ENCODE measurements at regions of chr4 and their contacts with region 1.

Region 1: DNA sequence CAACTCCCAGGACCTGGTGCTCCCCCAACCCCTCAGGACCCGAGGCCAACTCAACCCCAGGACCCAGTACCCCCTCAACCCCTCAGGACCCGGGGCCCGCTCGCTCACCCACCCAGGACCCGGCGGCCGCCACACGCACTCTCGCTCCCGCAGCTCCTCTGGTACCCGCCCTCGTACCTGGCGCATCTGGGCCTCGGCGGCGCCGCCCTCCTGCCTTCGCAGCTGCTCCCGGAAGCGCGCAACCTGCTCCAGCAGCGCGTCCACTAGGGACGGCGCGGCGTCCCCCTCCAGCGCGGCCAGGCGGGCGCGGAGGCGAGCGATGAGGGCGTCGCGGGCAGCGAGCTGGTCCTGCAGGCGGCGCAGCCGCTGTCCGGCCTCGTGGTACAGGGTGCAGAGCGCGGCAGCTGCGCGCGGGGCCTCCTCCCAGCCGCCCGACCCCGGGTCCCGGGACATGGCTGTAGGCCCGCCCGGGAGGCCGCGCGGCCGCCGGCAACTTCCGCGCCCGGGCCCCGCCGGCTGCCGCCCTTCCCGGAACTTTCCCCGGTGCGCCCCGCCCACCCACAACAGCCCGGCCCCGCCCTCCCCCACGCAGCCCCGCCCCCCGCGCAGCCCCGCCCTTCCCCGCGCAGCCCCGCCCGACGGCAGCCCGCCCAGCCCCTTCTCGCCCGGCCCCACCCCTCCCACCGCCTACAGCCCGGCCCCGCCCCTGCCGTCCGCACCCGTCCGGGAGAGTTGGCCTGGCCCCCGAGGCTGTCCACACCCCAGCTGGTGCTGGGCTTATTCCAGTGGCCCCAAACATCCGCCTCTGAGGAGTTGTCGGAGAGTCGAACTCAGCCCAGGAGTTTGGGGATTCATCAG is at the start of gene TNIP2:
- DNase-seq: peak; percentile 77 to 85 (median 81)
- H3K4me3 ChIP-seq: peak within 1 kb of the TSS; percentile 25 to 68
- H3K4me3 Mint-ChIP-seq: peak within 1 kb of the TSS; percentile 75 to 89 (median 86)
- H3K27ac ChIP-seq: peak within 1 kb of the TSS; percentile 83
- H3K27ac Mint-ChIP-seq: peak within 1 kb of the TSS; percentile 68 to 93 (median 85)
- H3K4me1 ChIP-seq: peaks cover 25% of the 10 kb centered on the region
- H3K4me1 Mint-ChIP-seq: peaks cover 18 to 39% (median 29%) of the 10 kb centered on the region in 4 donors
- H3K27me3 ChIP-seq: no peaks in the 10 kb centered on the region
- H3K27me3 Mint-ChIP-seq: no peaks in the 10 kb centered on the region
- total RNA-seq, gene TNIP2: 50.0 to 50.5 TPM

Region 2: GRCh38 chr4:2662598-2662997 is 93.5 kb before region 1 on chr4:
- CTCF ChIA-PET with region 1: no interaction called
- POLR2A ChIA-PET with region 1: no interaction called
- intact Hi-C with region 1: no loop called
- DNase-seq: no peak
- H3K4me3 ChIP-seq: no peak overlapping the region
- H3K4me3 Mint-ChIP-seq: no peak overlapping the region
- H3K27ac ChIP-seq: no peak overlapping the region
- H3K27ac Mint-ChIP-seq: no peak overlapping the region
- H3K4me1 ChIP-seq: peaks cover 13% of the 10 kb centered on the region
- H3K4me1 Mint-ChIP-seq: peaks cover 17 to 22% (median 19%) of the 10 kb centered on the region in 4 donors
- H3K27me3 ChIP-seq: no peaks in the 10 kb centered on the region
- H3K27me3 Mint-ChIP-seq: no peaks in the 10 kb centered on the region

Region 3: DNA sequence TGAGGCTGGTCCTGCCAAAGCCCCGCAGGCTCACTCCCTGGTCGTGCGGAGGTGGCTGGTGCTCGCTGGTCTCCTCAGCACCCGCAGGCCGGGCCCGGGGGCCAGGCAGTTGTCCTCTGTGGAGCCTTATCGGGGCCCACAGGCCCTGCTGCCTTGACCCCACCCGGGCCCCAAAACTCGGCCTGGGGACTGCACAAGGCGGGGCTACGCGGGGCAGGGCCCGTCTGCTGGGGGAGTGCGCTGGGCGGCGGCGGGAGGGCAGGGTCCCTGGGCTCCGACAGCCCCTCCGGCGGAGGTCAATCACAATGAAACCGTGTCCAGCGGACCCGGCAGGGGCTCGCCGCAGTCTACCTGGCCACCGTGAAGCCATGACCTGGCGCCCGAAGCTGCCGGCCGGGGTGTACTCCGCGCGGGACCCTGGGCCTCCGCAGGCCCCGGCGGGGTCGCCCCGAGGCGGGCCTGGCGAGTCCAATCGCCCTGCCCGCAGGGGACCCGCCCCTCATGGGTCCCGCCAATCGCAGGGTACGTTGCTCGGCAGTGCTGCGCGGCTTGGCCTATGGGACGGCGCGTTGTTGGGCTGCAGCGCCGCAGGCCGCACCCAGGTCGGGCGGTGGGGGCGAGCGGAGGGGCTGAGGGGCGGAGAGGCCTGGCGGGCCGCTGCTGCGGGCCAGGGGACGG is 87.3 kb after region 1 on chr4 and contains the start of gene ADD1:
- CTCF ChIA-PET with region 1: no interaction called
- POLR2A ChIA-PET with region 1: interaction called, 4 read pairs
- intact Hi-C with region 1: loop called (anchors 5 kb)
- DNase-seq: peak; percentile 87 to 99 (median 93)
- H3K4me3 ChIP-seq: peak within 1 kb of the TSS; percentile 72 to 81
- H3K4me3 Mint-ChIP-seq: peak within 1 kb of the TSS; percentile 90 to 98 (median 94)
- H3K27ac ChIP-seq: peak within 1 kb of the TSS; percentile 84
- H3K27ac Mint-ChIP-seq: peak within 1 kb of the TSS; percentile 93 to 97 (median 95)
- H3K4me1 ChIP-seq: peaks cover 71% of the 10 kb centered on the region
- H3K4me1 Mint-ChIP-seq: peaks cover 37 to 72% (median 45%) of the 10 kb centered on the region in 4 donors
- H3K27me3 ChIP-seq: no peaks in the 10 kb centered on the region
- H3K27me3 Mint-ChIP-seq: no peaks in the 10 kb centered on the region
- total RNA-seq, gene ADD1: 289 to 293 TPM

Region 4: GRCh38 chr4:3715061-3715854 is 959.2 kb after region 1 on chr4:
- CTCF ChIA-PET with region 1: no interaction called
- POLR2A ChIA-PET with region 1: no interaction called
- intact Hi-C with region 1: no loop called
- DNase-seq: no peak
- H3K4me3 ChIP-seq: no peak overlapping the region
- H3K4me3 Mint-ChIP-seq: no peak overlapping the region
- H3K27ac ChIP-seq: no peak overlapping the region
- H3K27ac Mint-ChIP-seq: no peak overlapping the region
- H3K4me1 ChIP-seq: no peaks in the 10 kb centered on the region
- H3K4me1 Mint-ChIP-seq: no peaks in the 10 kb centered on the region
- H3K27me3 ChIP-seq: no peaks in the 10 kb centered on the region
- H3K27me3 Mint-ChIP-seq: peaks cover 13 to 16% of the 10 kb centered on the region in 2 donors

Measured in CD4-positive, alpha-beta memory T cell (primary cell).